ENCODE measurements at regions of chr19 and their contacts with region 1.

Region 1: GRCh38 chr19:51439021-51439465 is 19.2 kb downstream of the SIGLEC8 start:
- DNase-seq: peak in 2 of 3 donors; percentile 17 to 49
- ATAC-seq: peak; percentile 52
- H3K4me3 ChIP-seq: no peak overlapping the region
- H3K4me1 ChIP-seq: no peaks in the 10 kb centered on the region
- CTCF ChIP-seq: no peak

Region 2: GRCh38 chr19:51338563-51339312 is 100.3 kb before region 1 on chr19:
- intact Hi-C with region 1: loop called in 1 of 2 experiments (anchors 10 kb)
- DNase-seq: peak; percentile 89 to 92 (median 91)
- ATAC-seq: peak; percentile 78
- H3K4me3 ChIP-seq: peak overlapping the region; percentile 22
- H3K4me1 ChIP-seq: peaks cover 9% of the 10 kb centered on the region
- CTCF ChIP-seq: peak; percentile 82

Measured in mucosa of descending colon (tissue), 3 donors.